Right ventricle myocardium inferior (tissue), 1 donor: ENCODE measurements at regions of chr3 and their contacts with region 1.

Region 1: GRCh38 chr3:73086071-73086494 is 24.6 kb downstream of the EBLN2 start:
- DNase-seq: no peak
- ATAC-seq: peak; percentile 68

Region 2: DNA sequence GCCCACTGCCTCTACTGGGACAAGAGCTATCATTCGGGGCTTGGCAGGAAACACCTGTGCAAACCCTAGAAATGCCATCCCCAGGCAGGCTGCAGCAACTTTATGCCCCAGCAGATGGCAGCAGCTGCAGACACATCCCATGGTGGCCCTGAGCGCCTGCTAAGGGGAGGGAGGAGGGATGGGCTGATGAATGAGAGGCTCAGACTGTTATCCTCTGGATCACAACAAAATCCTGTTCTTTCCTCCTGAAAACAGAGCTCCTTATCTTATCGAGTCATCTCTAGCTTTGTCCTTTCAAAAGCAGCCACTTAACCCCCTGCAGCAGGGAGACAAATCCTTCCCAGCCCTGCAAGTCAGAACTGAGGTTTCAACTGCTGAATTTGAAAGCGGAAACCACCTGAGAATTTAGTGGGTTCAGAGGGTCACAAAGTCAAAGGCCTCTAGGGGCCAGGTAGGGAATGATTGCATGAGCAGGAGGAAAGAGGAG is 1210.6 kb before region 1 on chr3:
- intact Hi-C with region 1: loop called (anchors 10 kb)
- DNase-seq: peak; percentile 85
- ATAC-seq: peak; percentile 90

Region 3: GRCh38 chr3:72847751-72848702 is 238.1 kb before region 1 on chr3 and contains the start of gene SHQ1:
- intact Hi-C with region 1: loop called (anchors 5 kb)
- DNase-seq: peak; percentile 98
- ATAC-seq: peak; percentile 97
- total RNA-seq, gene SHQ1: 13.8 TPM

Region 4: DNA sequence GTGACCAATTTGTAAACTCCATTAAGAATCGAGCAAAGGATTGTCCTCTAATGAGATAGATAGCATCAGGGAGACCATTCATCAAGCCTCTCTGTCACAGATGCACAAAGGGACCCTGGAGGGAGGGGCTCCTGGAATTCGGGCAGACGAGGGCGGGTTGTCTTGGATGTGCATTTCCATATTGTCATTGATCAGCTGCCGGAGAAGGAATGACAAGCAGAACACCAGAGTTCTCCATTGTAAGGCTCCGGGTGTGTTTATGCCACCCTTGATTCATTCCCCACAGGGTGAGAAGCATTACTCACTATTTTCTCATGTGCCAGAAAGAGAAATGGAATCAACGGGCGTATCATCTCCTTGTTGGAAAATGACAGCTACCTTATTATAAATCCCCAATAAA is 142.9 kb after region 1 on chr3:
- intact Hi-C with region 1: no loop called
- DNase-seq: no peak
- ATAC-seq: no peak

Region 5: DNA sequence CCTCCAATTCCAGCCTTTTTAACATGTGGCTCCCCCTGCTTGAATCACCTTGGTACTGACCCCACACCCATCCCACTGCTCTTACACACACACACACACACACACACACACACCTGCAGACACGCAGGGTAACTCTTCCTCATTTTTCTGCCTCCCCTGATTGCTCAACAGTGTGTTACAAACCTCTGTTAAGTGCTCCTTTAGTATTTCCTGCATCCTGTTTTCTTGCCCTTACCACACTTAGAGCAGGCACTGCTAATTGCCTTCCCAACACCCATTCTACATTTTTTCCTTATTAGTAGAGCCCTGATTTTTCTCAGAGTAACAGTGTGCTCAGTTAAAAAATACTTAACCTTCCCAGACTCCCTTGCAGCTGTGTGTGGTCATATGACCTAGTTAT is 159.4 kb after region 1 on chr3:
- intact Hi-C with region 1: no loop called
- DNase-seq: no peak
- ATAC-seq: no peak